ENCODE measurements at regions of chr2 and their contacts with region 1.

Region 1: GRCh38 chr2:20378792-20379519 is 28.3 kb upstream of the PUM2 start:
- DNase-seq: no peak
- H3K4me3 ChIP-seq: no peak overlapping the region
- CTCF ChIP-seq: peak; percentile 91

Region 2: GRCh38 chr2:20356042-20356441 is 22.9 kb before region 1 on chr2:
- CTCF ChIA-PET with region 1: interaction called, 14 read pairs
- POLR2A ChIA-PET with region 1: no interaction called
- DNase-seq: peak; percentile 52
- H3K4me3 ChIP-seq: no peak overlapping the region
- CTCF ChIP-seq: no peak

Region 3: DNA sequence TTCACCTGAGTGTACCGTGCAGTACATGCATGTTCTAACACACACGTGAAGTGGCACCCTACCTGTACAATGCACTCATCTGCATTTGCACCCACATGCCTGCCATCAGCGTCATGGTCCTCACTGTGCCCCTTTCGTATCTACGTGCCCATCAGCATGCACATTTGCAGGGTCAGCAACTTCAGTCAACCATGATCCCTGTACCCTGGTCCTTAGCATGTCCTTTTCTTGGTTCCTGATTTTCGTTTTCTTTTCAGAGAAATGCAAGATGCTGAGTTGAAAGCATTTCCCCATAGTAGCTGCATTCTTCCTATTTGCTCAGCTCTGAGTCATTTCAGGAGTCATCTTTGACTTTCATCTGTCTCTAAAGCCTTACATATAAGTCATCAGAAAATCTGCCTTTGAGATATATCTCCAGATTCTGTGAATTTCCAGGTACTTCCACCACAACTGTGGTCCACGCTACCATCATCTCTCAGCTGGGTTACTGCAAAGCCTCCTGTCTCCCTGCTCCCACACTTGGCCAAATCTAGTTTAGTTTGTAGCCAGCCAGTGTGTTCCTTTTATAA is 13.6 kb before region 1 on chr2:
- CTCF ChIA-PET with region 1: interaction called, 90 read pairs
- POLR2A ChIA-PET with region 1: no interaction called
- DNase-seq: peak; percentile 28
- H3K4me3 ChIP-seq: no peak overlapping the region
- CTCF ChIP-seq: no peak

Region 4: GRCh38 chr2:20398956-20399567 is 20.1 kb after region 1 on chr2:
- CTCF ChIA-PET with region 1: interaction called, 14 read pairs
- POLR2A ChIA-PET with region 1: no interaction called
- DNase-seq: no peak
- H3K4me3 ChIP-seq: no peak overlapping the region
- CTCF ChIP-seq: no peak

Region 5: DNA sequence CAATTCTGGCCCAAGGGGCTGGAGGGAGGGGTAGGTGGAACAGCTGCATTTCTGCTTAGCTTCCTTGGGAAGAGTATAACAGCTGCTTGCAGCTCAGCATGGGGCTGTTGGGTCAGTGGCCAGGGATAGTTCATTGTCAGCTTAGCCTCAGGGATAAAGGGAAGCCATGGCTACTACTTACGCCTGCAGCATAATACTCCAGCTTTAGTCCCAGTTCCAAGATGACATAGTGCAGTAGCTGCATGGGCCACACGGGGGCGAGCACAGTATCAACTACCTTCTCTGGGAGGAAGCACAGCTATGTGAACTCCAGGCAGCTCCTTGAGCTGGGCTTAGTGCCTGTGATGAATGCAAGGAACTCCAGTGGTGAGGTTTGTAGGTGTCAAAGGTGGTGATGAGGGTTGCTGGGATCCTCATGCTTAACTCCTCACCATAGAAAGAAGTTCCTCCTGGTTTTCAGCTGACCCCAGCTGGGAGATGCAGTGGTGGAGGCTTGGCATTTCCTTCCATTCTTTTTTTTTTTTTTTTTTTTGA is 32.5 kb after region 1 on chr2:
- CTCF ChIA-PET with region 1: interaction called, 14 read pairs
- POLR2A ChIA-PET with region 1: interaction called, 3 read pairs
- DNase-seq: no peak
- H3K4me3 ChIP-seq: no peak overlapping the region
- CTCF ChIP-seq: peak; percentile 86

Region 6: GRCh38 chr2:20438334-20439192 is 59.6 kb after region 1 on chr2:
- CTCF ChIA-PET with region 1: interaction called, 17 read pairs
- POLR2A ChIA-PET with region 1: no interaction called
- DNase-seq: peak; percentile 46
- H3K4me3 ChIP-seq: no peak overlapping the region
- CTCF ChIP-seq: no peak